Heart left ventricle (tissue), 16 donors: ENCODE measurements at regions of chr1 and their contacts with region 1.

Region 1: GRCh38 chr1:83761167-83762038 is 237.5 kb downstream of the TTLL7 start:
- DNase-seq: no peak
- ATAC-seq: no peak
- H3K4me3 ChIP-seq: no peak overlapping the region
- H3K27ac ChIP-seq: no peak overlapping the region
- H3K4me1 ChIP-seq: no peaks in the 10 kb centered on the region
- H3K27me3 ChIP-seq: peaks cover 0 to 4% (median 0%) of the 10 kb centered on the region in 9 donors
- CTCF ChIP-seq: no peak
- POLR2A ChIP-seq: no peak

Region 2: GRCh38 chr1:83705091-83705490 is 56.3 kb before region 1 on chr1:
- intact Hi-C with region 1: loop called in 1 of 10 experiments (anchors 10 kb)
- DNase-seq: no peak
- ATAC-seq: no peak
- H3K4me3 ChIP-seq: no peak overlapping the region
- H3K27ac ChIP-seq: no peak overlapping the region
- H3K4me1 ChIP-seq: peaks cover 0 to under 1% (median 0%) of the 10 kb centered on the region in 12 donors
- H3K27me3 ChIP-seq: no peaks in the 10 kb centered on the region
- CTCF ChIP-seq: no peak
- POLR2A ChIP-seq: no peak

Region 3: DNA sequence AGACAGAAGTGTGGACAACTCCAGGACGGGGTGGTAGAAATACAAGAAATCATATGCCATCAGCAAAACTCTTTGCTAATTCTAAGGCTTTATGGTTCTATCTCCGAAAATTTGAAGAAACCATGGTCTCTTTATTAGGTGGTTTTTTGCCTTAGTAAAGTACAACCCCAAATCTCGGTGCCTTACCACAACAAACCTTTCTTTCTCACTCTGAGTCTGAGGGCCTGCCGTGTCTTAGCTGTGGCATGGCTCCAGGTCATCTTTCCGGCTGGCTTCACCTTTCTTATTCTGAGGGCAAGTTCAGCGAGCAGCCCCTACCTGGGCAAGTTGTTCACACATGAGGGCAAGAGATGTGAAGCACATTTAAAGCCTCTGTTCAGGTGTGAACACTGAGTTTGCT is 43.1 kb before region 1 on chr1:
- intact Hi-C with region 1: no loop called
- DNase-seq: no peak
- ATAC-seq: no peak
- H3K4me3 ChIP-seq: no peak overlapping the region
- H3K27ac ChIP-seq: no peak overlapping the region
- H3K4me1 ChIP-seq: no peaks in the 10 kb centered on the region
- H3K27me3 ChIP-seq: no peaks in the 10 kb centered on the region
- CTCF ChIP-seq: no peak
- POLR2A ChIP-seq: no peak

Region 4: GRCh38 chr1:84048820-84049219 is 287.4 kb after region 1 on chr1:
- intact Hi-C with region 1: no loop called
- DNase-seq: no peak
- ATAC-seq: no peak
- H3K4me3 ChIP-seq: no peak overlapping the region
- H3K27ac ChIP-seq: no peak overlapping the region
- H3K4me1 ChIP-seq: no peaks in the 10 kb centered on the region
- H3K27me3 ChIP-seq: no peaks in the 10 kb centered on the region
- CTCF ChIP-seq: no peak
- POLR2A ChIP-seq: no peak